ENCODE measurements at regions of chr3 and their contacts with region 1.

Region 1: DNA sequence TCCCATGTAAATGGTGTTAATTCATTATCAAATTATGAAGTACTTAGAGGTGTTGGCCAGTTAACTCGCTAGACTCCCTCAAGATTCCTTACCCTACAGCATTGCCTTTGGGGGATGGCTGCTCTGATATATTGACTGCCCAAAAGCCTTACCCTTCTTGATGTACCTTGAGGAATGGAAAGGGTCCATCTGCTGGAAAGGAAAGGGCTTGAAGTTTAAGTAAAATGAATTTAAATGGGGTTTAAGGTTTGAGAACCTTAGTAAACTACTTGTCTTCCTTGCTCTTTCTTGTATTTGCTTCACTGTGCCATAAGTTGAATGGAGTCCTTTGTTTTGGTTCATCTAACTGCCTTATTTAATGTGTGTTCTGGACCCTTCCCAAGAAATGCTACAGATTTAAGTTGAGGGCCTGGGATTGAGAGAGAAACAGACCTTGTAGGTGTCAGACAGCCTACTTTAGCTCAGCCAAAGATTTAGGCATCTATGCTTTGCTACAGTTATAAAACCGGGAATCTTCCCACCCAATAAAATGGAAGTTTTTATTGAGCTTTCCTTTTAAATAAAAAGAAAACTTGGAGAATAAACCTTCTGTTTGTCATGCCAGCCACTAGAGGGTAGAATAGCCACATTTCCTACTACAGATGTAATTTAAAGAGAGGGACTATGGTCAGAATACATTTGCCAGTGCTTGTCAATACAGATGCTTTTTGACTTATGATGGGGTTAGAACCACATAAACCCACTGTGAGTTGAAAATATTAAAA is 25.3 kb downstream of the CMSS1 start:
- DNase-seq: no peak
- H3K4me3 ChIP-seq: no peak overlapping the region
- H3K27ac ChIP-seq: peak overlapping the region in 1 of 5 donors; percentile 6
- H3K4me1 ChIP-seq: peaks cover 0 to 32% of the 10 kb centered on the region in 2 donors
- H3K27me3 ChIP-seq: no peaks in the 10 kb centered on the region
- CTCF ChIP-seq: peak; percentile 63 to 83 (median 77)
- POLR2A ChIP-seq: no peak

Region 2: DNA sequence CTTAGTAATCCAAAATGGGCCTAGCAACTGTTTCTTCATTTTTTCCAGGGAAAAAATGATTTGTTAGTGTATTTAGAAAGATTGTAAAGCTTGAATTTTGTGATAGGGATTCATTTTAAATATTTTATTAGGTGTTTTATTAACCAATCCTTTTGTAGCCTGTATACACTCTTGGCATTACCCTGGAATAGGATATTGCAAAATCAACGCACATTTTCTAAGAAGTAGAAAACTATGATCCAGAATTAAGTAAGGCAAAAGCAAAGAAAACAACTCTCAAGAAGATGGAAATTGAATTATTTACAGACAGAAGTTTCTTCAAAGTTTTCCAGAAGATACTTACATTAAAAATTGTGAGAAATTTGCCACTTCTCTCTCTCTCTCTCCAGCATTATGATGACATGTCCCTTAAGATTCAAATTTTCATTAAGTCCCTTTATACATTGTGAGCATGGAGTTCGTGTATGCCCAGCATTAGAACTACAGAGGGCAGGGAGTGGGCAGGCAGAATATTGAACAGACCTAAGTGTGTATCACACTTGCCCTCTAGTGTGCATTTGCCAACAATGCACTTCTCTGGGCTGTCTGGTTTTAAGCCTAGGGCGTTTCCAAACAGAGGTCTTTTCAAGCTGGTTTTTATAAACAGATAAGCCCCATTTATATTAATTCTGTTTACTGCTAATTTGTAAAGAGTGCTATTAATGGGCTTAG is 53.8 kb before region 1 on chr3:
- intact Hi-C with region 1: no loop called
- DNase-seq: peak; percentile 18 to 57 (median 24)
- H3K4me3 ChIP-seq: no peak overlapping the region
- H3K27ac ChIP-seq: no peak overlapping the region
- H3K4me1 ChIP-seq: no peaks in the 10 kb centered on the region
- H3K27me3 ChIP-seq: no peaks in the 10 kb centered on the region
- CTCF ChIP-seq: peak; percentile 36 to 59 (median 42)
- POLR2A ChIP-seq: no peak

Region 3: DNA sequence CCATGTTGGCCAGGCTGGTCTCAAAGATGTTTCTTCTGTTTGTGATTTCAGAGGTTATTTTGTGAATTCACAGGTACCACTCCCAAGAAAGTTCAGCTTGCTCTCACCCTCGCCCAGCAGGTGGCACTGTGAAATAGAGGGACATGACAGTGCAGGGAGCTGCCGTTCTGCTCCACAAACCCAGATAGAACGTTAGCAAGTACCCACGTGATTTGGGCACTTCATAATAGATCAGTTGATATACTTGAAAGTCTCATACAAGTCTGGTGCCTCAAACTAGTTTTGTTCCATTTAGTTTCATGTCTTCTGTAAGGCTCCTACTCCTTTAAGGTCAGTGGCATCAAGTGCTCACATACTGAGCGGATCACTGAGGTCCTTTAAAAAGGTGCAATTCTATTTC is 225.8 kb after region 1 on chr3:
- intact Hi-C with region 1: loop called (anchors 10 kb)
- DNase-seq: peak; percentile 79 to 95 (median 82)
- H3K4me3 ChIP-seq: no peak overlapping the region
- H3K27ac ChIP-seq: no peak overlapping the region
- H3K4me1 ChIP-seq: peaks cover 0 to 14% of the 10 kb centered on the region in 2 donors
- H3K27me3 ChIP-seq: no peaks in the 10 kb centered on the region
- CTCF ChIP-seq: peak; percentile 55 to 86 (median 76)
- POLR2A ChIP-seq: no peak